Activated T-helper 2 cell treated with anti-CD3 and anti-CD28 coated beads, Interferon-gamma antibody, Interleukin-2, Interleukin-4, amounts not matched to agents 10 μg/mL and 5 μg/mL and 100 μg/mL, durations not matched to agents 14 hours and 24 hours and 36 hours (primary cell): ENCODE measurements at regions of chr4 and their contacts with region 1.

Region 1: DNA sequence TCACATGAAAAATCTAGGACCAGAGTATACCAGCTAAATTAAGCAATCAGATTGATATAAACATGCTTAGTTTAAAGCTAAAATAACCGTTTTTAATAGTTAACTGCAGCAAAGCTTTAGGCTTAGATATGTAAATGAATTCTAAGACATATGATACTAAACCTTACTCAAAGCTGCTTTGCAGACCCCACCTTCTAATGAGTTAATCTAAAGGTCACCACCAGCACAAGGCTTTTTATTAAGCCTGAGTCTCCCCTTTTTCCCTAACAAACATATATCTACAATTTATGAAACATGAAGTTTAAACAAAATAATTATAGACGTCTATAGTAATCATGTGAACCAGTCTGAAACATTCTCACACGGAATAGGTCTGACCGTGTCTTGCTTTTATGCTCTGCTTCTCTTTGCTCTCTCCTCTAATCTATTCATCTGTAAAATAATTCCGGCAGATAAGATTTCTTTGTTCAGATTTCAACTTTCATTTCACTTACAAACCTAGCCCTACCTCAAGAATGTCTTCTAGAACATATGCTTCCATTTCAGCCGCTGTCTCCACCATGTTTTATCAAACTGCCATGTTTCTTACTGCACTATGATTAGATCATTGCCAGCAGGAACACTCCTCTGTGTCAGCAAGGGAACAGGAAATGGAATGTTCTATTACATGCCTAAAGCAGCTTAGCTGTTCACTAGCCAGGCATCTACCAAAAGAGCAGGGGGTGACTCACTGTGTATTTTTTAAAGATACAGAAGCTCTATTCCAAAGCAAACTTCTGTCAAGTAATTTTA is 35.9 kb downstream of the ANKRD17 start:
- DNase-seq: peak; percentile 57
- H3K4me3 Mint-ChIP-seq: no peak overlapping the region
- H3K27ac Mint-ChIP-seq: no peak overlapping the region
- H3K4me1 Mint-ChIP-seq: peaks cover 23% of the 10 kb centered on the region
- H3K27me3 Mint-ChIP-seq: no peaks in the 10 kb centered on the region

Region 2: GRCh38 chr4:73181231-73181630 is 41.4 kb before region 1 on chr4:
- intact Hi-C with region 1: loop called (anchors 5 kb)
- DNase-seq: no peak
- H3K4me3 Mint-ChIP-seq: no peak overlapping the region
- H3K27ac Mint-ChIP-seq: no peak overlapping the region
- H3K4me1 Mint-ChIP-seq: peaks cover 4% of the 10 kb centered on the region
- H3K27me3 Mint-ChIP-seq: no peaks in the 10 kb centered on the region

Region 3: DNA sequence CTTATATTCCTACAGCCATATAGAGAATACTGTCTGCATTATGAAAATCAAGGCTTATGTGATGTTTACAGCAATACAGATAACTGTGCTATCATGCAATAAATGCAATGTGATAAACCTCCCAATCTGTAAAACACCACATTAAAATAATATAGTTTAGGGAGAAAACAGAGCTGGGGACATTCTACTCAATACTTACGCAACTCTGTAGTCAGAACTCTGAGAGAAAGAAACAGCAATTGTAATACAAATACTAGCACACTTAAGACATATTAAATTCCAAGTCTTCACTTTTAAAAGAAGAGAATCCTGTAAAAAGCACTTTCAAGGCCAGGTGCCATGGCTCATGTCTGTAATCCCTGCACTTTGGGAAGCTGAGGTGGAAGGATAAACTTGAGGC is 25.4 kb before region 1 on chr4:
- intact Hi-C with region 1: no loop called
- DNase-seq: no peak
- H3K4me3 Mint-ChIP-seq: no peak overlapping the region
- H3K27ac Mint-ChIP-seq: no peak overlapping the region
- H3K4me1 Mint-ChIP-seq: peaks cover 8% of the 10 kb centered on the region
- H3K27me3 Mint-ChIP-seq: no peaks in the 10 kb centered on the region